CD14-positive monocyte (primary cell): ENCODE measurements at regions of chr12 and their contacts with region 1.

Region 1: GRCh38 chr12:102474438-102475064 is 5.8 kb downstream of the IGF1 start:
- DNase-seq: peak in 1 of 3 donors; percentile 10
- H3K4me3 ChIP-seq: no peak overlapping the region
- H3K4me3 Mint-ChIP-seq: peak overlapping the region in 1 of 2 donors; percentile 43
- H3K27ac ChIP-seq: no peak overlapping the region
- H3K27ac Mint-ChIP-seq: no peak overlapping the region
- H3K4me1 ChIP-seq: no peaks in the 10 kb centered on the region
- H3K4me1 Mint-ChIP-seq: no peaks in the 10 kb centered on the region
- H3K27me3 ChIP-seq: peaks cover 0 to 2% of the 10 kb centered on the region in 2 donors
- H3K27me3 Mint-ChIP-seq: peaks cover 5 to 8% (median 7%) of the 10 kb centered on the region in 3 donors
- CTCF ChIP-seq: no peak

Region 2: DNA sequence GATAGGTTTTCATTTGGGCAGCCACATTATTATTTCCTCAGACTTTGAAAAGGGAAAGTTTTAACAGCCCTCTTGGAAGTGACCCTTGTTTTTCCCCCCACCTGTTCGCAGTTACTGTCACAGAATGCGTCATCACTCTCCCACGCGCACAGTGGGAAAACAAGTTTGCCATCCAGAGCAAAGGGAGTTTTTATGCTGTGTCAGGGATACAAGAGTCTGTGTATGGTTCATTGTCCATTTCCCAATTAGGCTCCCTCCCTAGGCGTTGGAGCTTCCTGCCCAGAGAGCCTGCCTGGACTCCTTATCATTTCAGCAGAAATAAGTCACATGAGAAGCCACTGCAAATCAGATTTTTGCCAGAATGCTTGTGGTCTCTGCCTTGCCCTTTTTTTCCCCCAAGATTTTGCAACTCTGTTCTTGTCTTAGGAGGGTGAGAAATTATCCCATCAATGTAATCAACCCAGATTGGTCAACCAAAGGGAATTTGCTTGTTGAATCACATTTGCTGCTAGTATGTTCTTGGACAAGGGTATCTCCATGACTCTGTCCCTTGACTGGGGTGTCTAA is 98.3 kb before region 1 on chr12:
- intact Hi-C with region 1: no loop called
- DNase-seq: no peak
- H3K4me3 ChIP-seq: no peak overlapping the region
- H3K4me3 Mint-ChIP-seq: no peak overlapping the region
- H3K27ac ChIP-seq: no peak overlapping the region
- H3K27ac Mint-ChIP-seq: no peak overlapping the region
- H3K4me1 ChIP-seq: no peaks in the 10 kb centered on the region
- H3K4me1 Mint-ChIP-seq: no peaks in the 10 kb centered on the region
- H3K27me3 ChIP-seq: no peaks in the 10 kb centered on the region
- H3K27me3 Mint-ChIP-seq: peaks cover 0 to 1% (median 0%) of the 10 kb centered on the region in 3 donors
- CTCF ChIP-seq: no peak

Region 3: GRCh38 chr12:102522768-102523167 is 48.2 kb after region 1 on chr12:
- intact Hi-C with region 1: loop called in 1 of 2 experiments (anchors 5 kb)
- DNase-seq: no peak
- H3K4me3 ChIP-seq: no peak overlapping the region
- H3K4me3 Mint-ChIP-seq: no peak overlapping the region
- H3K27ac ChIP-seq: no peak overlapping the region
- H3K27ac Mint-ChIP-seq: no peak overlapping the region
- H3K4me1 ChIP-seq: no peaks in the 10 kb centered on the region
- H3K4me1 Mint-ChIP-seq: no peaks in the 10 kb centered on the region
- H3K27me3 ChIP-seq: no peaks in the 10 kb centered on the region
- H3K27me3 Mint-ChIP-seq: peaks cover 0 to 11% (median 8%) of the 10 kb centered on the region in 3 donors
- CTCF ChIP-seq: no peak